Activated naive CD4-positive, alpha-beta T cell treated with anti-CD3 and anti-CD28 coated beads for 36 hours (primary cell): ENCODE measurements at regions of chr7 and their contacts with region 1.

Region 1: GRCh38 chr7:20798081-20798693 is 11.5 kb upstream of the SP8 start:
- DNase-seq: peak; percentile 13
- H3K4me3 Mint-ChIP-seq: peak overlapping the region; percentile 38
- H3K27ac Mint-ChIP-seq: no peak overlapping the region
- H3K4me1 Mint-ChIP-seq: peaks cover 15% of the 10 kb centered on the region
- H3K27me3 Mint-ChIP-seq: peaks cover 61% of the 10 kb centered on the region

Region 2: GRCh38 chr7:19107356-19108146 is 1690.6 kb before region 1 on chr7:
- CTCF ChIA-PET with region 1: no interaction called
- intact Hi-C with region 1: loop called (anchors 2 kb)
- DNase-seq: no peak
- H3K4me3 Mint-ChIP-seq: no peak overlapping the region
- H3K27ac Mint-ChIP-seq: no peak overlapping the region
- H3K4me1 Mint-ChIP-seq: peaks cover 3% of the 10 kb centered on the region
- H3K27me3 Mint-ChIP-seq: peaks cover 87% of the 10 kb centered on the region

Region 3: GRCh38 chr7:20330240-20330927 is 467.8 kb before region 1 on chr7 and contains the start of gene ITGB8:
- CTCF ChIA-PET with region 1: interaction called, 3 read pairs
- intact Hi-C with region 1: loop called (anchors 5 kb)
- DNase-seq: peak; percentile 75
- H3K4me3 Mint-ChIP-seq: peak within 1 kb of the TSS; percentile 74
- H3K27ac Mint-ChIP-seq: no peak within 1 kb of the TSS
- H3K4me1 Mint-ChIP-seq: peaks cover 18% of the 10 kb centered on the region
- H3K27me3 Mint-ChIP-seq: peaks cover 46% of the 10 kb centered on the region
- total RNA-seq, gene ITGB8: not detected